SK-N-SH (cell line): ENCODE measurements at regions of chr7 and their contacts with region 1.

Region 1: DNA sequence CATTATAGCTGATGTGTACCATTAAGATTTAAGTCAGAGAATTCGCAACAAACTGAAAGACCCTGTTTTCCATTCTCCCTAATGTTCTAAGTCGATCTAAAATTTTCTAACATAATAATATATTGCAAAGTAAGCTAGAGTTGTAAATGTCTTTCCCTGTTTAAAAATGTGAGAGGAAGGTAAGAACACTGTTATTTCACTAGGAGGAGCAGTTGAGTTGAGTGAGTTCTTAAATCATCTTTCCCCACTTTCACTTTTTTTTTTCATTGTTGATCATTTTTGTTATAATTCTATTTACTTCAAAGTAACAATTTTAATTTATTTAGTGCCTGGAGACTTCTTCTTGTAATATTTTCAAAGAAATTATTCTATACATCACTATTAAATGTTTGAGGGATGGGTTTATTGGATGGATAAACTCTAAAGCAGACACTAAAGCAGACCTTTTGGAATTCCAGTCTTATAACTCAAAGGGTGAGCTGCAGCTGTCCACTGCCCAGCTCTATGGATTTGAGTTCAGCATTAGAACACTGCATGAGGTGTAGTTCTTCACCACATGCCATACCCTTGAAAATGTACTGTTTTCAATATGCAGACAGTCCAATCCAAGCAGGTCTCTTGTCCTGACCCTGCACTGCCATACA is 181.3 kb upstream of the FZD1 start:
- DNase-seq: peak; percentile 38
- H3K4me3 ChIP-seq: no peak overlapping the region
- H3K27ac ChIP-seq: peak overlapping the region; percentile 56 to 95; a peak in 3 of 4 replicates
- H3K4me1 ChIP-seq: peaks cover 23 to 49% of the 10 kb centered on the region in 2 experiments
- H3K27me3 ChIP-seq: no peaks in the 10 kb centered on the region
- CTCF ChIP-seq: peak; percentile 85
- EP300 ChIP-seq: no peak
- RAD21 ChIP-seq: peak; percentile 86

Region 2: DNA sequence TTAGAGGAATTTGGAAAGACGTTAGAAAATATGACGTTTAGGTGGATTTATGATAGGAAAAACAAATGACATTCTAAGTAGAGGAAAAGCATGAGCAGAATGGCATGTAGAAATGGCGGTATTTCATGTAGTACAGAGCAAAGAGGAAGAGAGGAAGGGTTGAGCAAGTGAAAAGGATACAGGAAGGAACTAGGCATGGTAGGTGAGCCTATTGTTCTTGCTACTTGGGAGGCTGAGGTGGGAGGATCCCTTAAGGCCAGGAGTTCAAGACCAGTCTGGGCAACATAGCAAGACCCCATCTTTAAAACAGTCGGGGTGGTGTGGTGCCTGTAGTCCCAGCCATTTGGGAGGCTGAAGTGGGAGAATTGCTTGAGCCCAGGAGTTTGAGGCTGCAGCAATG is 735.2 kb before region 1 on chr7:
- CTCF ChIA-PET with region 1: no interaction called
- POLR2A ChIA-PET with region 1: no interaction called
- DNase-seq: no peak
- H3K4me3 ChIP-seq: peak overlapping the region; percentile 81 to 95
- H3K27ac ChIP-seq: 0 out of 4 replicates have a peak overlapping the region, but pooled peaks of 1 of the 2 experiments have one; percentile 74
- H3K4me1 ChIP-seq: peaks cover 7 to 15% of the 10 kb centered on the region in 2 experiments; a peak in 3 of 4 replicates
- H3K27me3 ChIP-seq: no peaks in the 10 kb centered on the region
- CTCF ChIP-seq: no peak
- EP300 ChIP-seq: no peak
- RAD21 ChIP-seq: no peak

Region 3: DNA sequence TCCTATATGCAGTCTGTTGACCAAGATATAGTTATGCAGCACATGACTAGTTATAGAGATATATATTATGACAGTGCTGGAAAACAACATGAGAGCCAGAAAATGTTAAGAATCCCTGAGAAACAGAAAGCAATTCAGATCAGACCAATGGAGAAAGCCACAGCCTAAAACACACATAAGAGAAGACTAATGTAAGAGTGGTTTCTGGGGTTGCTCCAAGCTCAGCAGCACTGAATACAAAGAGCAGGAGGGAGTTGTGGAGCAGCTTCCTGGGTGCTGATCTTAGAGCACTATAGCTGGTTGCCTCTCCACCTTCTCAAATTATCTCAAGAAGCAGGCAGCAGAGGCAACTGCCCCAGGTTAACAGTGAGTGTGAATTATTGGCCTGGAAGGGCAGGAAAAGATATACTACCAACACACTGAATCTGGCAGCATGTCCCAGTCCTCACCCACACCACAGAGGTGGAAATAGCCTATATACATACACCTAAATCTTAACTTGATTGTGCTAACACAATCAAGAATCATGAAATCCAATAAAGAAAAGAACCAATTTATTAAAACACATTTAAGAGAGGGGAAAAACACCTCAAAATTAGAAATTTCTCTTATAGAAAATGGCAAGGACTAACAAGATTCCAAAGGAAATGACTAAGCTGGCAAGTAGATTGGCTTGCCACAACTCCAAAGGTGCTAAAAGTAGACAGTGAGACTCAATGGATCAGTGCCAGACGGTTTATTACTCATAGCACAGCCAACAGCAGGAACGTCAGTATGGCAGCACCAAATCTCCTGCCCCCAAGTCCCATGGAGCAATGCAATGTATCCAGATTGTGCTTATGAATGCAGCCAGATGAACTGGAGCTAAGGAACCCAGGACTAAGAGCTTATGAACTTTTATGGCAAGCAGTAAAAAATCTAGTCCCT is 608.4 kb before region 1 on chr7:
- CTCF ChIA-PET with region 1: no interaction called
- POLR2A ChIA-PET with region 1: no interaction called
- DNase-seq: no peak
- H3K4me3 ChIP-seq: no peak overlapping the region
- H3K27ac ChIP-seq: peak overlapping the region; percentile 22 to 49; a peak in 3 of 4 replicates
- H3K4me1 ChIP-seq: peaks cover 0 to 16% of the 10 kb centered on the region in 2 experiments; a peak in 2 of 4 replicates
- H3K27me3 ChIP-seq: no peaks in the 10 kb centered on the region
- CTCF ChIP-seq: no peak
- EP300 ChIP-seq: peak in 1 of 2 experiments; percentile 53; a peak in 1 of 4 replicates
- RAD21 ChIP-seq: no peak

Region 4: GRCh38 chr7:91046322-91047089 is 36.5 kb before region 1 on chr7:
- CTCF ChIA-PET with region 1: interaction called, 11 read pairs
- POLR2A ChIA-PET with region 1: no interaction called
- DNase-seq: no peak
- H3K4me3 ChIP-seq: no peak overlapping the region
- H3K27ac ChIP-seq: peak overlapping the region in 1 of 2 experiments; percentile 16; a peak in 1 of 4 replicates
- H3K4me1 ChIP-seq: no peaks in the 10 kb centered on the region; a peak in 1 of 4 replicates
- H3K27me3 ChIP-seq: no peaks in the 10 kb centered on the region
- CTCF ChIP-seq: peak; percentile 60
- EP300 ChIP-seq: no peak
- RAD21 ChIP-seq: peak; percentile 48

Region 5: GRCh38 chr7:91064938-91065337 is 18.0 kb before region 1 on chr7:
- CTCF ChIA-PET with region 1: interaction called, 21 read pairs
- POLR2A ChIA-PET with region 1: no interaction called
- DNase-seq: no peak
- H3K4me3 ChIP-seq: no peak overlapping the region
- H3K27ac ChIP-seq: no peak overlapping the region
- H3K4me1 ChIP-seq: peaks cover 4 to 8% of the 10 kb centered on the region in 2 experiments; a peak in 3 of 4 replicates
- H3K27me3 ChIP-seq: no peaks in the 10 kb centered on the region
- CTCF ChIP-seq: no peak
- EP300 ChIP-seq: no peak
- RAD21 ChIP-seq: no peak

Region 6: DNA sequence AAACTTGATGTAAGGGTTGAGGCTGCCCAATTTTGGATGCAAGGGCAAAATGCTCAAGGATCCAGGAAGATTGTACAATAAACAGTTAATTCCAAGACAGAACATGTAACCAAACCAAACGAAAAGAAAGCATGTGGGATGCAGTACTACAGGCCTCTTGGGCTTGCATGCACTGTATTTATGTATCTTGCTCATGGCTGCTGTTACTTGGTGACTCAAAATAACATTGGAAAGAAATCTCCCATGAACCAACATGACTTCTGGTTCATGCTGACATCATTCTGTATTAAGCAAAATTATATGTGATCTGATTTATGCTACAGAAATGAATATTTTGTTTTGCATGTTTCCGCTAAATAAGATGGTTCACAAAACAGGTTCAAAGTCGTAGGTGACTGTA is 115.4 kb after region 1 on chr7:
- CTCF ChIA-PET with region 1: no interaction called
- POLR2A ChIA-PET with region 1: no interaction called
- DNase-seq: no peak
- H3K4me3 ChIP-seq: no peak overlapping the region
- H3K27ac ChIP-seq: no peak overlapping the region
- H3K4me1 ChIP-seq: peaks cover under 1 to 15% of the 10 kb centered on the region in 2 experiments; a peak in 3 of 4 replicates
- H3K27me3 ChIP-seq: no peaks in the 10 kb centered on the region
- CTCF ChIP-seq: no peak
- EP300 ChIP-seq: no peak
- RAD21 ChIP-seq: no peak

Region 7: GRCh38 chr7:91264046-91264923 is 181.3 kb after region 1 on chr7 and contains the start of gene FZD1:
- CTCF ChIA-PET with region 1: interaction called, 13 read pairs
- POLR2A ChIA-PET with region 1: no interaction called
- DNase-seq: peak; percentile 98
- H3K4me3 ChIP-seq: peak within 1 kb of the TSS; percentile 79 to 92
- H3K27ac ChIP-seq: peak within 1 kb of the TSS; percentile 79 to 95
- H3K4me1 ChIP-seq: peaks cover 0 to 31% of the 10 kb centered on the region in 2 experiments; a peak in 2 of 4 replicates
- H3K27me3 ChIP-seq: no peaks in the 10 kb centered on the region
- CTCF ChIP-seq: peak; percentile 33
- EP300 ChIP-seq: peak; percentile 59 to 85; a peak in 2 of 4 replicates
- RAD21 ChIP-seq: no peak; the same call in 1 of the 2 replicates
- polyA plus RNA-seq, gene FZD1: 3.3 and 3.8 TPM in 2 replicates

Region 8: DNA sequence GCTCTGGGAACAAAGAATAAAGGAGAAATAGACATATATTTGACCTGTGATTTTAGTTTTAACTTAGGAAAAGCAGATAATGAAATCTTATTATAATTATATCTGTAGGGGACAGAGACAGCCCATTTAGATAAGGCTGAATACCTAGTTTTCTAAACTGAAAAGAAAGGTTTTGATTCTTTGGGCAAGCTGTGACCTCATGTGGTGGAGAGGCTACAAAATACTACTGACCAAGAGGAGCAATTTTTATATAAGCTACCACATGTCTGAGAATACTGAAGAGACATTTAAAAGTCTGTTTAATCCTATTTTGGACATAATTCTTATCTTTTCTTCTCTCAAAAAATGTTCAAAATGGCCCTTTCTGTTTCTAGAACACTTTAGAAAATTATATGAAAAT is 526.6 kb after region 1 on chr7:
- CTCF ChIA-PET with region 1: interaction called, 37 read pairs
- POLR2A ChIA-PET with region 1: no interaction called
- DNase-seq: peak; percentile 39
- H3K4me3 ChIP-seq: no peak overlapping the region
- H3K27ac ChIP-seq: peak overlapping the region in 1 of 2 experiments; percentile 68; a peak in 2 of 4 replicates
- H3K4me1 ChIP-seq: peaks cover 0 to 11% of the 10 kb centered on the region in 2 experiments; a peak in 2 of 4 replicates
- H3K27me3 ChIP-seq: no peaks in the 10 kb centered on the region
- CTCF ChIP-seq: peak; percentile 31; the same call in 1 of the 2 replicates
- EP300 ChIP-seq: peak in 1 of 2 experiments; percentile 16; a peak in 1 of 4 replicates
- RAD21 ChIP-seq: peak; percentile 80

Region 9: DNA sequence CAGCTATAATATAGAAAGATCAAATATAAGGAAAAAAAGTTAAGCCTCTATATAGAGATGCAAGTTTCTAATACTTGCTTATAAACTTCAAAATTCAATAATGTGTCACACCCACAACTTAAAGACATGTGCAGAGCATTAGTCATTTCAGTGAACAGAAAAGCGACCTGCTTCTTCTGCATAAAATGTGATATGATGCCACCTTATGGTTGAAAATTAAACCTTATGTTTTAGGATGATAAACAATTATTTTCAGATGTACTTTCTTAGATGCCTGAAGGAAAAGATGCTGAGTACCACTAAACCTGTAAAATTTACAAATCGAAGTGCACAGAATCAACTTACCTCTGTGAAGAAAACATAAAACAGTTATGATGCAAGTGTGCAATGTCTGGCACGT is 701.5 kb after region 1 on chr7:
- CTCF ChIA-PET with region 1: interaction called, 27 read pairs
- POLR2A ChIA-PET with region 1: no interaction called
- DNase-seq: peak; percentile 32
- H3K4me3 ChIP-seq: no peak overlapping the region
- H3K27ac ChIP-seq: no peak overlapping the region
- H3K4me1 ChIP-seq: no peaks in the 10 kb centered on the region; a peak in 1 of 4 replicates
- H3K27me3 ChIP-seq: no peaks in the 10 kb centered on the region
- CTCF ChIP-seq: peak; percentile 70
- EP300 ChIP-seq: no peak
- RAD21 ChIP-seq: peak; percentile 84